GM10248 (cell line): ENCODE measurements at regions of chr2 and their contacts with region 1.

Region 1: GRCh38 chr2:178891265-178891958 is 84.2 kb upstream of the TTN start:
- DNase-seq: peak; percentile 34
- CTCF ChIP-seq: peak; percentile 84

Region 2: GRCh38 chr2:178830451-178830850 is 61.0 kb before region 1 on chr2:
- CTCF ChIA-PET with region 1: no interaction called
- POLR2A ChIA-PET with region 1: no interaction called
- DNase-seq: no peak
- CTCF ChIP-seq: no peak

Region 3: GRCh38 chr2:178874529-178875240 is 16.7 kb before region 1 on chr2:
- CTCF ChIA-PET with region 1: interaction called, 28 read pairs
- POLR2A ChIA-PET with region 1: no interaction called
- DNase-seq: no peak
- CTCF ChIP-seq: no peak

Region 4: DNA sequence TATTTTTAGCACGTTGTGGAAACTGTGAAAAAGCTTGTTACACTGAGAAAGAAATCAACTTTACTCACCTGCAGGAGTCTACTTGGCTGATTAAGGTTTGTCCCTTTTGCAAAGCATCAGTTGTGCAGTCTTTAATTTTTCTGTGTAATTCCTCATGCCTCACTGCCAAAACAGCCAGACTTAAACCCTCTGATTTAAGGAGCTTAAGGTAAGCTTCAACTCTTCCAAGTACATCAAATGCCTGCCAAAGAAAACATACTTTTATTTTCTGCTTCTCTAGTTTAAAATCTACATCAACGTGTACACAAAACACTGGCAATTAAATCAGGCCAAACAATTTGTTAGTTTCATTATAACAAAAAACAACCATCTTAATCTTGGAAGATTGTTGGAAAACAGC is 13.8 kb after region 1 on chr2:
- CTCF ChIA-PET with region 1: interaction called, 31 read pairs
- POLR2A ChIA-PET with region 1: no interaction called
- DNase-seq: no peak
- CTCF ChIP-seq: no peak